Endothelial cell of umbilical vein (primary cell): ENCODE measurements at regions of chr3 and their contacts with region 1.

Region 1: DNA sequence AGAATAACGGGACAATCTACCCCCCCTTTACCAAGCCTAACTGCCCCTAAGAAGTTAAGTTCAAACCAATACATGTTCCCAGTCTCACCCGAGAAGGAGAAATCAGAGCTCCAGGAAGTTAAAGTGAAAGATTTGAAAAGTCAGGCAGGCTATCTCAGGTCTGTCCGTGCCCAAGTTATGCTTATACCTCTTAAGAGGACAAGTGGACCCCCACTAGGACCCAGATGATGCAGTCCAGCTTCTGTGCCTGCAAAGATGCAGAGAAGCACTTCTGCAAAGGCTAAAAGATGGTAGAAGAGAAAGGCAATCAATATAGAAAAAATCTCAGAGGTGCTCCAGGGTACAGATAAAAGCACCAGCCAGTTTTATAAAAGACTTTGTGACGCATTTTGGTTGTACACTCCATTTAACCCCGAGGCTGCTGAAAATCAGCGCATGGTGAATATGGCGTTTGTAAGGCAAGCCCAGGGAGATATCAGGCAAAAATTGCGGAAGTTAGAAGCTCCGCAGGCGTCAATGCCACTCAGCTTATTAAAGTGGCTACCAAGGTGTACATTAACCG is 9.8 kb upstream of the SLC9C1 start:
- DNase-seq: peak; percentile 53
- H3K4me3 ChIP-seq: peak overlapping the region; percentile 11 to 53 (median 43)
- H3K27ac ChIP-seq: no peak overlapping the region
- H3K4me1 ChIP-seq: peaks cover 8% of the 10 kb centered on the region
- H3K27me3 ChIP-seq: no peaks in the 10 kb centered on the region
- CTCF ChIP-seq: no peak
- POLR2A ChIP-seq: no peak

Region 2: GRCh38 chr3:112314649-112315048 is 10.8 kb after region 1 on chr3:
- CTCF ChIA-PET with region 1: interaction called, 15 read pairs
- POLR2A ChIA-PET with region 1: no interaction called
- dilution Hi-C with region 1: no loop called
- intact Hi-C with region 1: no loop called
- DNase-seq: no peak
- H3K4me3 ChIP-seq: no peak overlapping the region
- H3K27ac ChIP-seq: no peak overlapping the region
- H3K4me1 ChIP-seq: no peaks in the 10 kb centered on the region
- H3K27me3 ChIP-seq: peaks cover 0 to 4% of the 10 kb centered on the region in 2 experiments
- CTCF ChIP-seq: no peak
- POLR2A ChIP-seq: no peak

Region 3: GRCh38 chr3:112321867-112322649 is 18.2 kb after region 1 on chr3:
- CTCF ChIA-PET with region 1: interaction called, 11 read pairs
- POLR2A ChIA-PET with region 1: no interaction called
- dilution Hi-C with region 1: no loop called
- intact Hi-C with region 1: no loop called
- DNase-seq: no peak
- H3K4me3 ChIP-seq: no peak overlapping the region
- H3K27ac ChIP-seq: no peak overlapping the region
- H3K4me1 ChIP-seq: no peaks in the 10 kb centered on the region
- H3K27me3 ChIP-seq: peaks cover 2 to 6% of the 10 kb centered on the region in 2 experiments
- CTCF ChIP-seq: no peak
- POLR2A ChIP-seq: no peak

Region 4: GRCh38 chr3:112948346-112948838 is 644.5 kb after region 1 on chr3:
- CTCF ChIA-PET with region 1: no interaction called
- POLR2A ChIA-PET with region 1: no interaction called
- dilution Hi-C with region 1: no loop called
- intact Hi-C with region 1: no loop called
- DNase-seq: no peak
- H3K4me3 ChIP-seq: no peak overlapping the region
- H3K27ac ChIP-seq: no peak overlapping the region
- H3K4me1 ChIP-seq: no peaks in the 10 kb centered on the region
- H3K27me3 ChIP-seq: peaks cover 1 to 2% of the 10 kb centered on the region in 2 experiments
- CTCF ChIP-seq: no peak
- POLR2A ChIP-seq: no peak